Left ventricle myocardium superior (tissue), 1 donor: ENCODE measurements at regions of chr1 and their contacts with region 1.

Region 1: DNA sequence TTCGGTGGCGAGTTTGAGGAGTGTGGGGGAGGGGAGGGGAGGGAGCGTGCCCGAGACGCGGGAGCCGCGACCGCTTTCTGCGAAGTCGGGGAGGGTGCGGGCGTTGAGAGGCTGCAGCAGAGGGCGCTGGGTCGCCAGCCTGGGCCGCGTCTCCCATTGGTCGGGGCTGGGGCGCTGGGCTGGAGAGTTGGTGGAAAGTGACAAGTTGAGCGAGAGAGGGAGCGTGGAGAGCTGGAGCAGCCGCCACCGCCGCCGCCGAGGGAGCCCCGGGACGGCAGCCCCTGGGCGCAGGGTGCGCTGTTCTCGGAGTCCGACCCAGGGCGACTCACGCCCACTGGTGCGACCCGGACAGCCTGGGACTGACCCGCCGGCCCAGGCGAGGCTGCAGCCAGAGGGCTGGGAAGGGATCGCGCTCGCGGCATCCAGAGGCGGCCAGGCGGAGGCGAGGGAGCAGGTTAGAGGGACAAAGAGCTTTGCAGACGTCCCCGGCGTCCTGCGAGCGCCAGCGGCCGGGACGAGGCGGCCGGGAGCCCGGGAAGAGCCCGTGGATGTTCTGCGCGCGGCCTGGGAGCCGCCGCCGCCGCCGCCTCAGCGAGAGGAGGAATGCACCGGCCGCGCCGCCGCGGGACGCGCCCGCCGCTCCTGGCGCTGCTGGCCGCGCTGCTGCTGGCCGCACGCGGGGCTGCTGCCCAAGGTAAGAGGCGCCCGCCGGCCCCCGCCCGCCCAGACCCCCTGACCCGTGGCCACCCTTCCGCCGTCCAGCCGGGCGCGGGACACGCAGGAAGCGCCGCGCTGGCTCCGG is at the start of gene ROR1:
- DNase-seq: peak; percentile 93
- ATAC-seq: peak; percentile 96
- total RNA-seq, gene ROR1: 9.0 TPM

Region 2: GRCh38 chr1:63917571-63918417 is 143.8 kb after region 1 on chr1:
- intact Hi-C with region 1: loop called (anchors 10 kb)
- DNase-seq: no peak
- ATAC-seq: no peak

Region 3: DNA sequence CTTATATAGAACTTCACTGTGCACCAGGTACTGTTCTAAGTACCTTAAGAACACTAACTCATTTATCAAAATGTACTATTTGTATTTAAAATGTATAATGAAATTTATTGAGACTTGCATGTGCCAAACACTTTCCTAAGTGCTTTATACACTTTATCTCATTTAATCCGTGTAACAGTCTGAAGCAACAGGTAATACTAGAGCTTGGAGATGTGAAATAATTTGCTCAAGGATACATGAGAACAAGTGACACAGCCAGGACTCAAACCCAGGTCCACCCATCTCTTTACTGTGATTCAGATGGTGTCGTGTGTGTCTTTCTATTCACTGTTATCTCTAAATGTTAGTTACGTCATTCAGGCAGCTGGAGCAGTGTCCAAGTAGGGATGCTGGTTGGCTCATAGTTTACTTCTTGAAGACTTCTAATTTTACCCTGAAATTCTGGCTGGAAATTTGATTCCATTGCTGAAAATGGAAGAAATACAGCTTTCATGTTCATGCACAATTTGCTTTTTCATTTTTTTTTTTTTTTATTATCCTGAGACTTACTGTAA is 259.7 kb after region 1 on chr1:
- intact Hi-C with region 1: no loop called
- DNase-seq: no peak
- ATAC-seq: peak; percentile 80

Region 4: GRCh38 chr1:64136752-64137411 is 362.9 kb after region 1 on chr1:
- intact Hi-C with region 1: loop called (anchors 10 kb)
- DNase-seq: peak; percentile 79
- ATAC-seq: peak; percentile 90